AG04450 (cell line): ENCODE measurements at regions of chr12 and their contacts with region 1.

Region 1: GRCh38 chr12:54207484-54208294 is 18.9 kb upstream of the SMUG1 start:
- DNase-seq: no peak
- H3K4me3 ChIP-seq: no peak overlapping the region
- H3K27ac ChIP-seq: no peak overlapping the region
- H3K27me3 ChIP-seq: peaks cover 55% of the 10 kb centered on the region
- CTCF ChIP-seq: peak; percentile 95

Region 2: DNA sequence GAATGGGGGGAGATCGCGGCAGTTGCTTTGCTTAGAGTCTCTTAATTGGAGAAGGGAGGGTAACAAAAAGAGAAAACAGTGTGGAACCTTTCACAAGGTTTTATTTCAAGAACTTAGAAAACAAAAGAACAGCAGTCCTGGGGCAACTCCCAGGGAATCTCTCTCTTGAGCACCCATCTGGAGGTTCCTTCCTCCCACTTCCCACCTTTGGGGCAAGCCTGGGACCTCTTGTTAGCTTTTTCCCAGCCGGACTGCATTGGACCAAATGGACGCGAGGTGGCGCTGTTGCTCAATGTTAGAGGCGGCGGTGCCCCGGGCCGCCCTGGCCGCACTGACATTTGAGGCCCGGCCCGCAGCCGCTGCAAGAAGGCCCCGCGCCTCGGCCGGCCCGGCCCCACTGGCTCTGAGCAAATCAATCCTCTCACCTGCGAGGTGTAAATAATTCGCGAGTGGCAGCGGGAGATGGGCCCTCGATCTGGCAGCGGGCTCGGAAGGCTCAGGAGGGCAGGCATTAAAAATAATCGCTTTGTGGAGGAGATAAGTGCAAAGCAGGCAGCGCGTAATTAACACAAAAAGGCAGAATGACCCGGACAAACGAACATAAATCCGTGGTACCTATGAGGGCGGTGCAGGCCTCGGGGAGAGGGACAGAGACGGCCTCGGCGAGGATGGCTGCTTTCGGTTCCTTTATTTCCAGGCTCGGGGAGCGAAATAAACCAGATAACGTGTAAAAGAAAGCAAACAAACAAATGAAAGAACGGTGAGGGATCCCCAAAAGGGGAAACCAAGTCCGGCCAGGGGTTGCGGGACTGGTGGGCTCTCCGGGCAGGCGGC is 201.6 kb before region 1 on chr12:
- CTCF ChIA-PET with region 1: interaction called, 163 read pairs
- POLR2A ChIA-PET with region 1: no interaction called
- DNase-seq: peak; percentile 20
- H3K4me3 ChIP-seq: peak overlapping the region; percentile 25
- H3K27ac ChIP-seq: no peak overlapping the region
- H3K27me3 ChIP-seq: peaks cover 95% of the 10 kb centered on the region
- CTCF ChIP-seq: peak; percentile 86

Region 3: DNA sequence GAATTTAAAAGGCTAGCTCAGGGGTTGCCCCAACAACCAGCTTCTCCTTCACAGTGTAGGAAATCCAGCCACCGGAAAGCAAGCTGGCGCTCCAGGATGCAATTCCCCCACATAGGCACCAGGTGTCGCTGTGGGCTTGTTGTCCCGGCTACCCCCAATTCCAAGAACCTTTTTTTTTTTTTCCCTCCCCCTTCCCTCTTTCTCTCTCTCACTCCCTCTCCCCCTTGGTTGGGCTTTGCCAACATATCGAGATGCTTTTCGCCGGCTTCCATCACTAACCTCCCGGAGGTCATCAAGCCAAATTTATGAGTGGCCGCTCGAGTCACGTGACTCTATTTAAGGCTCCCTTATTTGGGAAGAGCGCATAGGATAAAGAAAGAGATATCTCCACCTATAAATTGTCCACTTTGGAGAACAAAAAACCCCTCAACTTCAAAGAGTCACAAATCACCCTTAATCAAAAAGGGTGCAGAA is 175.0 kb before region 1 on chr12 and contains the start of gene HOXC5:
- CTCF ChIA-PET with region 1: interaction called, 11 read pairs
- POLR2A ChIA-PET with region 1: no interaction called
- DNase-seq: no peak
- H3K4me3 ChIP-seq: no peak within 1 kb of the TSS
- H3K27ac ChIP-seq: no peak within 1 kb of the TSS
- H3K27me3 ChIP-seq: peaks cover 85% of the 10 kb centered on the region
- CTCF ChIP-seq: peak; percentile 75
- polyA plus RNA-seq, gene HOXC5: not detected in 2 replicates

Region 4: GRCh38 chr12:54191550-54192022 is 16.1 kb before region 1 on chr12:
- CTCF ChIA-PET with region 1: interaction called, 95 read pairs
- POLR2A ChIA-PET with region 1: no interaction called
- DNase-seq: peak; percentile 60
- H3K4me3 ChIP-seq: no peak overlapping the region
- H3K27ac ChIP-seq: no peak overlapping the region
- H3K27me3 ChIP-seq: peaks cover 13% of the 10 kb centered on the region
- CTCF ChIP-seq: peak; percentile 92